ENCODE measurements at regions of chr9 and their contacts with region 1.

Region 1: GRCh38 chr9:130866474-130866965 is 30.1 kb downstream of the QRFP start:
- DNase-seq: peak; percentile 58
- H3K4me3 Mint-ChIP-seq: no peak overlapping the region
- H3K27ac Mint-ChIP-seq: no peak overlapping the region
- H3K4me1 Mint-ChIP-seq: no peaks in the 10 kb centered on the region
- H3K27me3 Mint-ChIP-seq: no peaks in the 10 kb centered on the region

Region 2: GRCh38 chr9:130701056-130702022 is 165.2 kb before region 1 on chr9:
- CTCF ChIA-PET with region 1: interaction called, 11 read pairs
- POLR2A ChIA-PET with region 1: no interaction called
- DNase-seq: peak; percentile 72
- H3K4me3 Mint-ChIP-seq: no peak overlapping the region
- H3K27ac Mint-ChIP-seq: no peak overlapping the region
- H3K4me1 Mint-ChIP-seq: peaks cover 22% of the 10 kb centered on the region
- H3K27me3 Mint-ChIP-seq: no peaks in the 10 kb centered on the region

Region 3: GRCh38 chr9:130842545-130842944 is 24.0 kb before region 1 on chr9:
- CTCF ChIA-PET with region 1: interaction called, 13 read pairs
- POLR2A ChIA-PET with region 1: no interaction called
- DNase-seq: no peak
- H3K4me3 Mint-ChIP-seq: no peak overlapping the region
- H3K27ac Mint-ChIP-seq: no peak overlapping the region
- H3K4me1 Mint-ChIP-seq: peaks cover 7% of the 10 kb centered on the region
- H3K27me3 Mint-ChIP-seq: no peaks in the 10 kb centered on the region

Region 4: DNA sequence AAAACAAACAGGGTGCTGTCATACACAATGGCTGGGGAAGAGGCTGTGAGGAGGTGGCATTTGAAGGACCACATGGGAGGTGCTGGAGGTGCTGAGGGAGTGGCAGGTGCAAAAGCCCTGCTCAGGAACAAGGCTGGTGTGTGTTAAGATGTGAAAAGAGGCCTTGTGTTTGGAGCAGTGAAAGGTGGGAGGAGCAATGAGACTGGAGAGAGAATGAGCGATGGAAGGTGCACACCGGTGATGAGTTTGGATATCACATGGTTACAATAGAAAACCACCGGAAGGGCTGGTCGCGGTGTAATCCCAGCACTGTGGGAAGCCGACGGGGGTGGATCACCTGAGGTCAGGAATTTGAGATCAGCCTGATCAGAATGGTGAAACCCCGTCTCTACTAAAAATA is 81.7 kb after region 1 on chr9:
- CTCF ChIA-PET with region 1: no interaction called
- POLR2A ChIA-PET with region 1: no interaction called
- DNase-seq: no peak
- H3K4me3 Mint-ChIP-seq: no peak overlapping the region
- H3K27ac Mint-ChIP-seq: peak overlapping the region; percentile 40
- H3K4me1 Mint-ChIP-seq: peaks cover 2% of the 10 kb centered on the region
- H3K27me3 Mint-ChIP-seq: peaks cover 24% of the 10 kb centered on the region

Region 5: DNA sequence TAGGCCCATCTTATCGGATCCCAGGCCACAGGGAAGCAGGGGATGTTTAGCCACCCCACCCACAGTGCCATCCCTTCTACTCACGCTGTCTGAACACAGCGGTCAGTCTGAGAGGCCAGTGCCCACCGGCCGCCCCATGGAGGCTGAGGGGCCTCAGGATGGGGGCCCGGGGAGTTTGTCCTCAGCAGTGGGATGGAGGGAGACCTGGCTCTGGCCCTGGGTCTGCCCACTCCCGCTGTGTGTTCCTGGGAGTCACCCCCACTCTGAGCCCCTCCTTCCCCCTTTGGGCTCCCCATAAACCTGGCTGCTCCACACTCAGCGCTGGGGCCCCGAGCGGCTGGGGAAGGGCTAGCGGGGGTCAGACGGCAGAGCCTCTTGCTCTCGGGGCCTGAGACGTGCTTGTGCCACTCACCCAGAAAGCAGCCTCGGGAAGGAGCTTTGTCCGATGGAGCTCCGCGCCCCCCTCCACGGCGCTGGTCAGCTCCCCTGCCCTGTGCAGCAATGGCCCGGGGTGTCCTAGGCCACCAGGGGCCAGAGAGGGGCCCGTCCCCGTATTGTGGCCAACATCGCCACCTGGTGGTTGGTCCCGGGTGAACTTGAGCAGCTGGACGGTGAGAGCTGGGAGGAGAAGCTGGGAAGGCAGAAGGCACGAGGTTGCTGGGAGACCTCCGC is 131.5 kb after region 1 on chr9:
- CTCF ChIA-PET with region 1: interaction called, 16 read pairs
- POLR2A ChIA-PET with region 1: no interaction called
- DNase-seq: peak; percentile 57
- H3K4me3 Mint-ChIP-seq: no peak overlapping the region
- H3K27ac Mint-ChIP-seq: no peak overlapping the region
- H3K4me1 Mint-ChIP-seq: no peaks in the 10 kb centered on the region
- H3K27me3 Mint-ChIP-seq: peaks cover 6% of the 10 kb centered on the region

Region 6: GRCh38 chr9:131046581-131047202 is 180.2 kb after region 1 on chr9:
- CTCF ChIA-PET with region 1: interaction called, 44 read pairs
- POLR2A ChIA-PET with region 1: no interaction called
- DNase-seq: peak; percentile 75
- H3K4me3 Mint-ChIP-seq: no peak overlapping the region
- H3K27ac Mint-ChIP-seq: no peak overlapping the region
- H3K4me1 Mint-ChIP-seq: peaks cover 5% of the 10 kb centered on the region
- H3K27me3 Mint-ChIP-seq: no peaks in the 10 kb centered on the region

Region 7: GRCh38 chr9:131082774-131083512 is 216.4 kb after region 1 on chr9:
- CTCF ChIA-PET with region 1: no interaction called
- POLR2A ChIA-PET with region 1: no interaction called
- DNase-seq: no peak
- H3K4me3 Mint-ChIP-seq: no peak overlapping the region
- H3K27ac Mint-ChIP-seq: no peak overlapping the region
- H3K4me1 Mint-ChIP-seq: no peaks in the 10 kb centered on the region
- H3K27me3 Mint-ChIP-seq: peaks cover 7% of the 10 kb centered on the region